CD4-positive, alpha-beta T cell (primary cell): ENCODE measurements at regions of chr19 and their contacts with region 1.

Region 1: GRCh38 chr19:3035542-3036118 is 6.5 kb upstream of the TLE2 start:
- DNase-seq: peak; percentile 88 to 98 (median 92)
- ATAC-seq: peak; percentile 84
- H3K4me3 ChIP-seq: peak overlapping the region; percentile 70
- H3K4me3 Mint-ChIP-seq: peak overlapping the region; percentile 89
- H3K27ac ChIP-seq: peak overlapping the region; percentile 60 to 77
- H3K27ac Mint-ChIP-seq: peak overlapping the region; percentile 92
- H3K4me1 ChIP-seq: peaks cover 26% of the 10 kb centered on the region
- H3K4me1 Mint-ChIP-seq: peaks cover 37% of the 10 kb centered on the region
- H3K27me3 ChIP-seq: no peaks in the 10 kb centered on the region
- H3K27me3 Mint-ChIP-seq: no peaks in the 10 kb centered on the region
- CTCF ChIP-seq: no peak

Region 2: GRCh38 chr19:2977001-2977685 is 58.5 kb before region 1 on chr19 and contains the start of gene TLE6:
- CTCF ChIA-PET with region 1: no interaction called
- POLR2A ChIA-PET with region 1: interaction called, 16 read pairs
- intact Hi-C with region 1: loop called (anchors 1 to 10 kb)
- DNase-seq: peak; percentile 88 to 97 (median 92)
- ATAC-seq: peak; percentile 99
- H3K4me3 ChIP-seq: peak within 1 kb of the TSS; percentile 66
- H3K4me3 Mint-ChIP-seq: peak within 1 kb of the TSS; percentile 96
- H3K27ac ChIP-seq: no peak within 1 kb of the TSS
- H3K27ac Mint-ChIP-seq: peak within 1 kb of the TSS; percentile 86
- H3K4me1 ChIP-seq: peaks cover 32% of the 10 kb centered on the region
- H3K4me1 Mint-ChIP-seq: peaks cover 17% of the 10 kb centered on the region
- H3K27me3 ChIP-seq: peaks cover 3 to 6% of the 10 kb centered on the region in 2 experiments
- H3K27me3 Mint-ChIP-seq: peaks cover 14% of the 10 kb centered on the region
- CTCF ChIP-seq: no peak
- total RNA-seq, gene TLE6: not detected

Region 3: DNA sequence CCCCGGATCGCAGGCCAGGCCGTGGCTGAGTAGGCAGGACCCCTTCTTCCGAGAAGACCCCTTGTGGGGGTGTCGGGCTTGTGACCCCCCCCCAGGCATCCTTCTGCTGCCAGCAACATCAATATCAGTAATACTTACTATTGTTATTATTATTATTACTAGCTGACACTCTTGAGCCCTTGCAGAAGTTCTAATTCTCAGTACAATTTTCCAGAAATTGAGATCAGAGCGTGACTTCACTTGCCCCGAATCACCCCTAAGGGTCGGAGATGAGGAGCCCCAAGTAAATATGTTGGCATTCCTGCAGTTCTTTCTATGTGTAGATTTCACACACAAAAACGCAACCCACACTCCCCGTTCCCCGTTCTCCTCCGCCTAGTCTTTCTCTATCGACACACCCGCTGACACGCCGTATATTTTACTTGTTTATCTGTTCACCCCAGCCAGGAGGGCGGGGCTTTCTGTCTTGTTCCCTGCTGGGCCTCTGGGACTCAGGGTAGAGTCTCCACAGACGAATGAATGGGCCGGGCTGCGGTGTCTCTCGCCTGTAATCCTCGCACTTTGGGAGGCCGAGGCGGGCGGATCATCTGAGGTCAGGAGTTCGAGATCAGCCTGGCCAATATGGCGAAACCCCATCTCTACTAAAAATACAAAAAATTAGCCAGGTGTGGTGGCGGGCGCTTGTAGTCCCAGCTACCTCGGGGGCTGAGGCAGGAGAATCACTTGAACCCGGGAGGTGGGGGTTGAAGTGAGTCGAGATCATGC is 12.0 kb after region 1 on chr19:
- CTCF ChIA-PET with region 1: interaction called, 4 read pairs
- POLR2A ChIA-PET with region 1: interaction called, 140 read pairs
- intact Hi-C with region 1: loop called (anchors 1 kb)
- DNase-seq: peak; percentile 58 to 90 (median 79)
- ATAC-seq: peak; percentile 98
- H3K4me3 ChIP-seq: peak overlapping the region; percentile 60
- H3K4me3 Mint-ChIP-seq: peak overlapping the region; percentile 96
- H3K27ac ChIP-seq: peak overlapping the region in 1 of 2 donors; percentile 9
- H3K27ac Mint-ChIP-seq: peak overlapping the region; percentile 96
- H3K4me1 ChIP-seq: peaks cover 34% of the 10 kb centered on the region
- H3K4me1 Mint-ChIP-seq: peaks cover 38% of the 10 kb centered on the region
- H3K27me3 ChIP-seq: no peaks in the 10 kb centered on the region
- H3K27me3 Mint-ChIP-seq: no peaks in the 10 kb centered on the region
- CTCF ChIP-seq: no peak

Region 4: GRCh38 chr19:3108775-3109174 is 73.1 kb after region 1 on chr19:
- CTCF ChIA-PET with region 1: interaction called, 13 read pairs
- POLR2A ChIA-PET with region 1: no interaction called
- intact Hi-C with region 1: no loop called
- DNase-seq: peak; percentile 60 to 85 (median 67)
- ATAC-seq: peak; percentile 66
- H3K4me3 ChIP-seq: no peak overlapping the region
- H3K4me3 Mint-ChIP-seq: no peak overlapping the region
- H3K27ac ChIP-seq: no peak overlapping the region
- H3K27ac Mint-ChIP-seq: no peak overlapping the region
- H3K4me1 ChIP-seq: peaks cover 12% of the 10 kb centered on the region
- H3K4me1 Mint-ChIP-seq: peaks cover 10% of the 10 kb centered on the region
- H3K27me3 ChIP-seq: no peaks in the 10 kb centered on the region
- H3K27me3 Mint-ChIP-seq: peaks cover 3% of the 10 kb centered on the region
- CTCF ChIP-seq: peak; percentile 88